Heart left ventricle (tissue), 16 donors: ENCODE measurements at regions of chr15 and their contacts with region 1.

Region 1: DNA sequence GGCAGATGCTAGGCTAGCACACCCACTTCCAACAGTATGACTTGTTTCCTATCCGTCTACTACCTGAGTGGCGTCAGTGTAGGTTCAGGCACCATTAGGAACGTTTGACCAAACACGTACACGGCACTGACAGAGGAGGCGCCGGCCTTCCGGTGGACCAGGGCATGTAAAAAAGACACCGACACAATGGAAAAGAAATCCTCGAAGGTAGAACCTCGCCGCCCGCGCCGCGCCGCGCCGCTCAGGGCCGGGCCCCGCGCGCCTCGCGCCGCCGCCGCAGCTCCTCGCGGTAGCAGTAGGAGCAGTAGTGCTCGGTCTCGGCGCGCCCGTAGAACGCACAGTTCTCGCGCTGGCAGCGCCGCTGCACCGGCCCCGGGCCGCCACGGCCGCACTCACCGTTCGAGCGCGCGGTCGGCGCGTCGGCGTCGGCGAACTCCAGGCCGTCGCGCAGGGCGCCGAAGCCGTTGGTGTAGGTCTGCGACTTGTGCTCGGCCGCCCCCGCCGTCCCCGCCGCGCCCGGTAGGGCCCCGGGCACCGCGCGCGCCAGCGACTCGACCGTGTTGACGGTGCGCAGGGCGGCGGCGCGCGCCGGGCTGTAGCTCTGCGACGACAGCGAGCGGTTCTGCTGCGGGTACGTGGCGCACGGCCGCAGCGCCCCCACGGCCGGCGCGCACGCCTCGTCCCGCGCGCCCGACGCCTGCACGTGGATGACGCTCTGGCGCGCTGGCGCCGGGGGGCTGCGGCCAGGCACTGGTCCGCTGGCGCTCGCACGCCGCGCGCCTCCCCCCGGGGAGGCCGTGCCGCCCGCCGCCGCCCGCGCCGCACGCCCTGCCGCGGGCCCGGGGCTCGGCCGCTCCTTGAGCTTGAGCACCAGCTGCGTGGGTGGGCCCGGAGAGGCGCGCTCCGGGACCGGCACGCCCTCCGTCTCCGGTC is 156.7 kb downstream of the KLF13 start:
- DNase-seq: no peak
- ATAC-seq: peak in 2 of 4 donors; percentile 8 to 28
- H3K4me3 ChIP-seq: peak overlapping the region in 9 of 12 donors; percentile 12 to 55 (median 39)
- H3K27ac ChIP-seq: no peak overlapping the region
- H3K4me1 ChIP-seq: peaks cover 0 to 11% (median under 1%) of the 10 kb centered on the region in 12 donors
- H3K27me3 ChIP-seq: peaks cover 0 to 36% (median 11%) of the 10 kb centered on the region in 9 donors
- CTCF ChIP-seq: no peak
- POLR2A ChIP-seq: no peak

Region 2: GRCh38 chr15:31447931-31448634 is 35.2 kb before region 1 on chr15:
- intact Hi-C with region 1: loop called in 2 of 10 experiments (anchors 5 kb)
- DNase-seq: no peak
- ATAC-seq: no peak
- H3K4me3 ChIP-seq: no peak overlapping the region
- H3K27ac ChIP-seq: no peak overlapping the region
- H3K4me1 ChIP-seq: peaks cover 0 to 19% (median 0%) of the 10 kb centered on the region in 12 donors
- H3K27me3 ChIP-seq: no peaks in the 10 kb centered on the region
- CTCF ChIP-seq: no peak
- POLR2A ChIP-seq: no peak

Region 3: GRCh38 chr15:31499953-31500765 is 16.8 kb after region 1 on chr15:
- intact Hi-C with region 1: no loop called
- DNase-seq: no peak
- ATAC-seq: peak; percentile 12 to 70 (median 50)
- H3K4me3 ChIP-seq: peak overlapping the region in 3 of 12 donors; percentile 7 to 11 (median 8)
- H3K27ac ChIP-seq: peak overlapping the region in 11 of 12 donors; percentile 1 to 53 (median 35)
- H3K4me1 ChIP-seq: peaks cover 0 to 14% (median 7%) of the 10 kb centered on the region in 12 donors
- H3K27me3 ChIP-seq: no peaks in the 10 kb centered on the region
- CTCF ChIP-seq: no peak
- POLR2A ChIP-seq: no peak

Region 4: DNA sequence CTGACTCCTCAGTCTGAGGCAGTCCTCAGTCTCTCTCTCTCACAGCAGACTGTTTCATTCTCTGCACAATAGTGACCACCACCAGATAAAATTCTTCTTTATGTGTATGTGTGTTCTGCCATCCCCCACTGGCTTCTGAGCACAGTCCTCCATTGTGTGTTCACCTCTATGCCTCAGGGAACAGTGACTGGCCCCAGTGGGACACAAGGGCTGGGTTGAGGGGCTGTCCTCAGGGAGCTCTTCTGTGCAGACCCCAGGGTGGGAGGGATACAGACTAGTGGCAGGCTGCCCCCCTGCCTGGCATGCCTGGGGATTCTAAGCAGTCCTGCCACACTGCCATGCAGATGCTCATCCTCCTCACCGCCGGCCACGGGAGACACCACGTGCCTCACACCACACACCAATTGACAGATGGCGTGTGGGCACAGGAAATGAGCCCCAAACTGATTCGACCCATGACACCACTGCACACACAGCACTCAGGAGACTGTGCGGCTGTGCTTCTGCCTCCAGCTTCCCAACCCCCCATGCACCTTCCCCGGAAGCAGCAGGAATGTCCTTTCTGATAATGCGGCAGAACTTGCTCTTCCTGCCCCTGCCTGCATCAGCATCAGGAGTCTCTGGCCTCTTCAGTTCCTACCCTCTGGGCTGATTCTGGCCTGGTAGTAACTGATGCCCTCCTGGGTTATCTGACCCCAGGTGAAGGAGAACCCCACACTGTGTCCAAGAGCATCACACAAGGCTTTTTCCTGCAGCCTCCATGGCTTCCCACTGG is 309.5 kb after region 1 on chr15:
- intact Hi-C with region 1: no loop called
- DNase-seq: no peak
- ATAC-seq: no peak
- H3K4me3 ChIP-seq: no peak overlapping the region
- H3K27ac ChIP-seq: no peak overlapping the region
- H3K4me1 ChIP-seq: no peaks in the 10 kb centered on the region
- H3K27me3 ChIP-seq: no peaks in the 10 kb centered on the region
- CTCF ChIP-seq: no peak
- POLR2A ChIP-seq: no peak